PC-9 (cell line): ENCODE measurements at regions of chr4 and their contacts with region 1.

Region 1: DNA sequence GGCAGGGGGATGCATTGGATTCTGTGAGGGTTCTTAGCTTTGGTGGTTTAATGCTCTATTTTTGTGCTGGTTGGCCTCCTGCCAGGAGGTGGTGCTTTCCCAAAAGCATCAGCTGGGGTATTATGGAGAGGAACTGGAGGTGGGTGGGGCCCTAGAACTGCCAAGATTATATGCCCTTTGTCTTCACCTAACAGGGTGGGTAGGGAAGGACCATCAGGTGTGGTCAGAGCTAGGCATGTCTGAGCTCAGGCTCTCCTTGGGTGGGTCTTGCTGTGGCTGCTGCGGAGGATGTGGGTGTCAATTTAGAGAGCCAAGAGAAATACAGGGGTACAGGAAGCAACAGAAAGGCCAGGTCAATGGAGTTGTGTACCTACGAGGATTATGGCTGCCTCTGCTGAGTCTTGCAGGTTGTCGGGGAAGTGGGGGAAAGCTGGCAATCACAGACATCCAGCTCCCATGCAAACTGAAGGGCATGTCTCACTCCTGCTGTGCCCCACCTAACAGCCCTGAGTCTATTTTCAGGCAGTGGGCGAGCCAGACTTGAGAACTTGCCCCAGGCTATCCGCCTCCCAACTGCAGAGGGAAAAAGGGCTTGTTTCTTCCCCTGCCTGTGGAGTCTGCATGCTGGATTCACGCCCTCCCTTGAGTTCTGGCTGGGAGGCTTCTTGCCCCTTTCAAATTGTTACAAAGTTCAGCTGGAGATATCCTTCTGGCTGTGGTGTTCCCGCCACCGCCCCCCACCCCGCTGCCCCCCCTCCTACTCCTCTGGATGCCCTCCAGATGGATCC is 212.0 kb downstream of the COMMD8 start:
- DNase-seq: no peak
- H3K4me3 ChIP-seq: no peak overlapping the region
- H3K27ac ChIP-seq: no peak overlapping the region
- H3K4me1 ChIP-seq: no peaks in the 10 kb centered on the region
- H3K27me3 ChIP-seq: no peaks in the 10 kb centered on the region
- CTCF ChIP-seq: no peak

Region 2: GRCh38 chr4:46937493-46937892 is 314.0 kb before region 1 on chr4:
- CTCF ChIA-PET with region 1: no interaction called
- POLR2A ChIA-PET with region 1: no interaction called
- intact Hi-C with region 1: no loop called
- DNase-seq: peak in 1 of 2 experiments; percentile 39
- H3K4me3 ChIP-seq: no peak overlapping the region
- H3K27ac ChIP-seq: no peak overlapping the region
- H3K4me1 ChIP-seq: peaks cover 10% of the 10 kb centered on the region; the same call in 1 of the 2 replicates
- H3K27me3 ChIP-seq: no peaks in the 10 kb centered on the region
- CTCF ChIP-seq: peak; percentile 61

Region 3: GRCh38 chr4:47050761-47051725 is 200.5 kb before region 1 on chr4:
- CTCF ChIA-PET with region 1: no interaction called
- POLR2A ChIA-PET with region 1: no interaction called
- intact Hi-C with region 1: no loop called
- DNase-seq: no peak
- H3K4me3 ChIP-seq: no peak overlapping the region
- H3K27ac ChIP-seq: no peak overlapping the region
- H3K4me1 ChIP-seq: no peaks in the 10 kb centered on the region
- H3K27me3 ChIP-seq: no peaks in the 10 kb centered on the region
- CTCF ChIP-seq: no peak

Region 4: GRCh38 chr4:47167081-47168035 is 84.2 kb before region 1 on chr4:
- CTCF ChIA-PET with region 1: no interaction called
- POLR2A ChIA-PET with region 1: interaction called, 27 read pairs
- intact Hi-C with region 1: no loop called
- DNase-seq: no peak
- H3K4me3 ChIP-seq: no peak overlapping the region
- H3K27ac ChIP-seq: no peak overlapping the region
- H3K4me1 ChIP-seq: no peaks in the 10 kb centered on the region
- H3K27me3 ChIP-seq: no peaks in the 10 kb centered on the region
- CTCF ChIP-seq: no peak